ENCODE measurements at regions of chr17 and their contacts with region 1.

Region 1: DNA sequence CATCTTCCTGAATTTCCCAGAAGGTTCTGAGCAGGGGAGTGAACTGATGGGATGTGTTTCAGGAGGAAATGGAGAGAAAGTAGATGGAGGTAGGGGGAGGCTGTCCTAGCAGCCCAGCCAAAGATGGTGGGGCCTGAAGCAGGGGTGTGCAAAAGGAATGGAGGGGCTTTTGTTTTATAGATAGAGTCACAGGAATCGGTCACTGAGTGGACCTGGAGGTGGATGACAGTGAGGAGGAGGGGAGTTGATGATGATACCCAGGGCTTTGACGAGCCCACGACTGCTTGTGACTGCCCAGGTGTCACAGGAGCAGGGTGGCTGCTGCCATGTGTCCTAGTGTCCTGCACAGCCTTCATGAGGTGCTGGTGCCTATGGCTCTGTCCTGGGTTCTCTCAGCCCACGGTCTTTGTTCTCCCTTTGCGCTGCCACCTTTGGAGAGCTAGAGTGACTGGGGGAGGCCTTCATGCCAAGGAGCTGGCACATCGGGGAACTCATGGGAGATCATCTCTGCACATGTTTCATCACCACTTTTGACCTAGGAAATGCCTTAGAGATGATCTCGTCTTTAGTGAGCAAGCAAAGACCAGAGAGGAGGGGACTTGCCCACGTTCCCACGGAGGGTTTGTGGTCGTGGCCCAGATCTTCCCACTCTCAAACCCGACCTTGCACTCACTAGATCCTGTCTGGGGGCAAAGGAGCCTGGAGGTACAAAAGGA is 23.3 kb downstream of the TBX4 start:
- DNase-seq: no peak
- H3K4me3 ChIP-seq: no peak overlapping the region
- H3K27ac ChIP-seq: no peak overlapping the region
- H3K4me1 ChIP-seq: peaks cover 7% of the 10 kb centered on the region
- H3K27me3 ChIP-seq: no peaks in the 10 kb centered on the region
- CTCF ChIP-seq: no peak
- POLR2A ChIP-seq: no peak

Region 2: DNA sequence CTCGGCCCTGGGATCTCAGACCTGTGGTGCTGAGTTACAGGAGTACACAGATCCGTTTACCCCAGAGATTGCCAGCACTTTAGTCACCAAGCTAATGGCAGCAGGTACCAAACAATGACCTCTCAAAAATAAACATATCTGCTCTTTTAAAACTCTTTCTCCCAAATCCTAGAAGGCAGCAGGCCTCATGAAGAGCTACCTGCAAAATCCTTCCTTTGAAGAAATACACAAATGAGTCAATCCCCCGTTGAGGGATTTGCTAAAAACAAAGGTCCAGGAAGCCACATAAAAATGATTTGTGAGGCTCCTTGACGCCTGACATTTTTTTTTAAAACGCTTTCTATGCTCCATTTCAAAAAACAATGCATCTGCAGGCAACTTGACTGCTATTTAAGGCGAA is 57.2 kb after region 1 on chr17:
- intact Hi-C with region 1: no loop called
- DNase-seq: no peak
- H3K4me3 ChIP-seq: no peak overlapping the region
- H3K27ac ChIP-seq: no peak overlapping the region
- H3K4me1 ChIP-seq: no peaks in the 10 kb centered on the region
- H3K27me3 ChIP-seq: no peaks in the 10 kb centered on the region
- CTCF ChIP-seq: no peak
- POLR2A ChIP-seq: no peak

Region 3: GRCh38 chr17:61783556-61784304 is 308.2 kb after region 1 on chr17:
- intact Hi-C with region 1: loop called (anchors 5 kb)
- DNase-seq: no peak
- H3K4me3 ChIP-seq: no peak overlapping the region
- H3K27ac ChIP-seq: no peak overlapping the region
- H3K4me1 ChIP-seq: no peaks in the 10 kb centered on the region
- H3K27me3 ChIP-seq: no peaks in the 10 kb centered on the region
- CTCF ChIP-seq: no peak
- POLR2A ChIP-seq: no peak

Measured in vagina (tissue), 2 donors.